ENCODE measurements at regions of chr11 and their contacts with region 1.

Region 1: DNA sequence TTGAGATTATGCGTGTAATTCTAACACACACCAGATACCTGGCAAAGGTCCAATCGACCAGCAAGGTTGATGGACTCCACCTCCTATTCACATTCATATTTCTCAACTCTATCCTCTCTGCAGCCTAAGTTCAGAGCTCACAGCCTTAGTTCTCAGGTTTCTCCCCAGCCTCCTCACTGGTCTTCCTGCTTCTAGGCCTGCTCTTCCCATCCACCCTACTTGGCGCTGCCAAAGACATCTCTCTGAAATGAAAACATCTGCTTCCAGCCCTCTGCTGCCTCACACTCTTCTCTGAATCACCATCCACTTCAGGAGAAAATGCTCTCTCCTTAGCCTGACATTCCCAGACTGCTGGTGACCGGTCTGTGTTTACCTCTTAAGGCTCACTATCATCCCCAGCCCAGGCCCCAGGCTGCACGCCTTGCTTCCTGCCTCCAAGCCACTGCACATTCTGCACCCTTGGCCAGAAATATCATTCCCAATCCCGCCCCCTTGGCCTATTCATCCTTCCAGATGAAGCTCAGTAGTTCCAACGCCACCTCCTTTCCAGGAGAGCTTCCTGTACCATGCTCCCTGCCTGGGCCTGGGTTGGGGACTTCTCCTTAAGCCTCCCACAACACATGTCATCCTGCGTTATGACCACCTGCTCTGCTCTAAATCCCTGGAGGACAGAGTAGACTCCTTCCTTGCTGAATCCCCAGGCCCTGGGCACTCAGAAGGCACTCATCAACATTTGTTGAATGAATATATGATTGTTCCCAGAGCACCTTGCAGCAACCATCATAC is 3.5 kb downstream of the ARRB1 start:
- DNase-seq: peak in 1 of 2 donors; percentile 50
- ATAC-seq: peak in 6 of 8 donors; percentile 2 to 42 (median 13)
- H3K4me3 ChIP-seq: no peak overlapping the region
- H3K27ac ChIP-seq: peak overlapping the region; percentile 9 to 95 (median 69)
- H3K4me1 ChIP-seq: peaks cover 36 to 95% (median 77%) of the 10 kb centered on the region in 9 donors
- H3K27me3 ChIP-seq: no peaks in the 10 kb centered on the region
- CTCF ChIP-seq: no peak

Region 2: DNA sequence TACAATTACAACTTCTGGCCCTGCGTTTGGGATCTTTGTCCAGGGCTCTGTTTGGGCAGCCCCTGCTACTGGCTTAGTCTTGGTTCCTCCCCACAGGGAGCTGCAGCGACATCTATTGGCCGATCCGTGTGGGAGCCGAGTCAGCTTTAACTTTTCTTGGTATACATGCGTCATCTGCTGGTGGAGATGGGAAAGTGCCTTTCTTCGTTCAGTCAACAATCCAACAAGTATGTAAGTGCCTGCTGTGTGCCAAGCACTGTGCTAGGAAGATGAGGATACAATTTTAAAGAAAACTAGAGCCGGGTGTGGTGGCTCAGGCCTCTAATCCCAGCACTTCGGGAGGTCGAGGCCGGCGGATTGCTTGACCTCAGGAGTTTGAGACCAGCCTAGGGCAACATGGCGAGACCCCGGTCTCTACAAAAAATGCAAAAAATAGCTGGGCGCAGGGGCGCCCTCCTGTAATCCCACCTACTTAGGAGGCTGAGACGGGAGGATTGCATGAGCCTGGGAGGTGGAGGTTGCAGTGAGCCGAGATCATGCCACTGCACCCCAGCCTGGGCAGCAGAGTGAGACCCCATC is 99.2 kb before region 1 on chr11:
- intact Hi-C with region 1: no loop called
- DNase-seq: peak; percentile 86 to 90
- ATAC-seq: peak; percentile 86 to 95 (median 91)
- H3K4me3 ChIP-seq: no peak overlapping the region
- H3K27ac ChIP-seq: no peak overlapping the region
- H3K4me1 ChIP-seq: peaks cover 0 to 3% (median 0%) of the 10 kb centered on the region in 9 donors
- H3K27me3 ChIP-seq: peaks cover 0 to 32% (median 17%) of the 10 kb centered on the region in 7 donors
- CTCF ChIP-seq: peak; percentile 97 to 100 (median 100)

Region 3: DNA sequence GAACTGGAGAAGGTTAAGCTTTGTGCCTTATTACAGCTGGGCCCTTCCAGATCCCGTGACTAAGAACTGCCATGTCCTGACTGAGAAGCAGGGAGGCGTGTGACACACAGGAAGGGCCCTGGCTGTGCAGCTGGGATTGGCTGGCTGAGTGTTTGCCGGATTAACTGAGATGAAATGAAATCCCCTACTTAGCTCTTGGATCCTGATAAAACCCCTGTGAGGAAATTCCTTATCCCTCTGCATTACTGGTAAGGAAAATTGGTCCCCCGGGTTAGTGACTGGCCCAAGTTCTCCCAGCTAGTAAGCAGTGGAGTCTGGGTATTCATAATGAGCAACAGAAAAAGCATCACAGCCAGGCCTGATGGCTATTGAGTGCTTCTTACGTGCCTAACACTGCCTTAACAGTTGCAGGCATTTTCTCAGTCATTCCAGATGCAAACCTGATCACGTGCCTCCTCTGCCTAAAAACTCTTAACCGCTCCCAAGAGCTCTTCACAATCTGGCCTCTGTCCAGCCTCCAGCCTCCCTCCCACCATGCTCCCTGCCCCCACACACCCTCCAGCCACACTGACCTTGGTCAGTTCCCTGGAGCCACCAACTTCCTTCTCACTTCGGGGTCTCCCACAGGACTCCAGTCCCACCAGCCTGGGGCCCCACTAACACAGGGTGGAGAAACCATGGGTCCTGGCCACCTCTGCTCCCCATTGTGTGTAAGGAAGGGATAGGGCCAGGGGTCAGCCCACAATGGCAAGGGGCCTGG is 34.3 kb before region 1 on chr11:
- intact Hi-C with region 1: loop called in 1 of 10 experiments (anchors 5 kb)
- DNase-seq: peak; percentile 60 to 72
- ATAC-seq: peak; percentile 51 to 78 (median 64)
- H3K4me3 ChIP-seq: no peak overlapping the region
- H3K27ac ChIP-seq: peak overlapping the region; percentile 46 to 99 (median 93)
- H3K4me1 ChIP-seq: peaks cover 21 to 72% (median 46%) of the 10 kb centered on the region in 9 donors
- H3K27me3 ChIP-seq: no peaks in the 10 kb centered on the region
- CTCF ChIP-seq: no peak